ENCODE measurements at regions of chr3 and their contacts with region 1.

Region 1: DNA sequence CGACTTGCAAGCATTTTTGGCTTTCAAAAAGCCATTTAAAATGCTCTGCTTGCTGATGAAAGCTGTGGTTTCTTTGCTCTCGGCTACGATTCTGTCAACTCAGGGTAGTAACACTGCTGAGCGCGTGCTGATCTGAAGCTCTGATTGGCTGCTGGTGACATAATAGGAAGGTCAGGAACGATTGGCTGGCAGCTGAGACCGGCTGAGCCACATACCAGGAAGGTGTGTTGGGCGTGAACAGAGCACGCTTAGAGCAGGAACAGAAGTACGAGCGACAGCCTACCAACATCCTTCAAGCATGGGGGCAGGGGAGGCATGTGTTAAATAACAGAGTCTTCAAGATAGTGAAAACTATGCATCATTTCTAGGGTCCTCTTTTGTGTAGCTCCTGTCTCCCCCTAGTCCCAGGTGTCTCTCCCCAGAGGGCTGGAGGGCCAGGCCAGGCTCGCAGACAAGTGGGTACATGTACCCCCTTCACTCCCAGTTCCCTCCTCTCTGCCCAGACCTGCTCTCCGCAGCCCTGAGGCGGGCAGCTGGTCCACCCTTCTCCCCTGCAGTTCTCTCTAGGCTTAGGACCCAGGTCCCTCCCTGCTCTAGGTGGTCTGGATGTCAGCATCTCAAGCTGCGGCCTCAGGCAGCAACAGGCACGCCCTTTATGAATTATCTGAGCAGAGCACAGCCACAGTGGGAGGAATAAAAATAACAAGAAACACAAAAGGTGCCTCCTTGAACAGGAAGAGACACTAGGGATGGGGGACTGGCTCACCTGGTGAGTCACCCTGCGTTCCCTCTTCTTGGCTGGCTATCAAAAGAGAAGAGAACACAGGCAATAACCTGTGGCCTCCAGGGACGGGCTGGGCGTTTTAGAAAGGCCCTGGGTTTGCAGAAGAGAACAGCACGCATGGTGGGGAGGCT is 76.0 kb downstream of the TAMM41 start:
- DNase-seq: peak; percentile 31 to 91 (median 86)
- ATAC-seq: peak; percentile 100
- H3K4me3 ChIP-seq: peak overlapping the region; percentile 12
- H3K4me3 Mint-ChIP-seq: peak overlapping the region; percentile 22 to 79 (median 62)
- H3K27ac ChIP-seq: peak overlapping the region; percentile 56
- H3K27ac Mint-ChIP-seq: peak overlapping the region; percentile 58 to 90 (median 70)
- H3K4me1 ChIP-seq: peaks cover 15% of the 10 kb centered on the region in 2 donors
- H3K4me1 Mint-ChIP-seq: peaks cover 11 to 30% (median 24%) of the 10 kb centered on the region in 7 donors
- H3K27me3 ChIP-seq: no peaks in the 10 kb centered on the region
- H3K27me3 Mint-ChIP-seq: no peaks in the 10 kb centered on the region

Region 2: GRCh38 chr3:11238880-11239279 is 531.9 kb before region 1 on chr3:
- CTCF ChIA-PET with region 1: no interaction called
- POLR2A ChIA-PET with region 1: no interaction called
- intact Hi-C with region 1: no loop called
- DNase-seq: no peak
- ATAC-seq: no peak
- H3K4me3 ChIP-seq: no peak overlapping the region
- H3K4me3 Mint-ChIP-seq: no peak overlapping the region
- H3K27ac ChIP-seq: no peak overlapping the region
- H3K27ac Mint-ChIP-seq: peak overlapping the region in 1 of 9 donors; percentile 64
- H3K4me1 ChIP-seq: no peaks in the 10 kb centered on the region
- H3K4me1 Mint-ChIP-seq: peaks cover 0 to 15% (median 0%) of the 10 kb centered on the region in 7 donors
- H3K27me3 ChIP-seq: no peaks in the 10 kb centered on the region
- H3K27me3 Mint-ChIP-seq: peaks cover 0 to 10% (median 6%) of the 10 kb centered on the region in 5 donors

Region 3: DNA sequence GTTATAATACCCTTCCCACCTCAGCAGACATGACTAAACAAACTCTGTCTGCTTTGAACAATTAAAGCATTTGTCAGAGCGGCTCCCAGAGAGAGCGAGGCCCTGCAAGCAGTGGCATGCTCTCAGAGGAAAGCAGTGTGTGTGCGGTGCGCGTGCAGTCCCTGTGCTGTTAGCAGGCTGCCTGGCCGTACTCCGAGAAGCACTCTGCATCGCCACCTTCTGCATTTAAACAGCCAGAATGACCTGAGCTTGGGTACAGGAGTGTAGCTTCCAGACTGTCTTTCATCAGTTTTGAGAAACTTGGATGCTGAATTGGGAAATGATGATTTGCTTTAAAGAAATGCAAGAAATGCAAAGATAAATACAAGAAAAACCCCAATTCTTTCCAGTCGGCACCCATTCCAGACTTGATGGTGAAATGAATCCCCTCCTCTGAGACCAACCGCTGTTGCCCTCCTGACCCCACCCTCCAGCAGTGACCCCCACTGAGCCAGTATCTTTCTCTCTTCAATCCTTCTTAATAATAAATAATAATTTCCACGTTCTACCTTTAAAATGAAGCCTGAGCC is 240.5 kb before region 1 on chr3:
- CTCF ChIA-PET with region 1: no interaction called
- POLR2A ChIA-PET with region 1: no interaction called
- intact Hi-C with region 1: no loop called
- DNase-seq: no peak
- ATAC-seq: no peak
- H3K4me3 ChIP-seq: no peak overlapping the region
- H3K4me3 Mint-ChIP-seq: no peak overlapping the region
- H3K27ac ChIP-seq: no peak overlapping the region
- H3K27ac Mint-ChIP-seq: no peak overlapping the region
- H3K4me1 ChIP-seq: no peaks in the 10 kb centered on the region
- H3K4me1 Mint-ChIP-seq: peaks cover 0 to 5% (median 3%) of the 10 kb centered on the region in 7 donors
- H3K27me3 ChIP-seq: no peaks in the 10 kb centered on the region
- H3K27me3 Mint-ChIP-seq: no peaks in the 10 kb centered on the region

Region 4: DNA sequence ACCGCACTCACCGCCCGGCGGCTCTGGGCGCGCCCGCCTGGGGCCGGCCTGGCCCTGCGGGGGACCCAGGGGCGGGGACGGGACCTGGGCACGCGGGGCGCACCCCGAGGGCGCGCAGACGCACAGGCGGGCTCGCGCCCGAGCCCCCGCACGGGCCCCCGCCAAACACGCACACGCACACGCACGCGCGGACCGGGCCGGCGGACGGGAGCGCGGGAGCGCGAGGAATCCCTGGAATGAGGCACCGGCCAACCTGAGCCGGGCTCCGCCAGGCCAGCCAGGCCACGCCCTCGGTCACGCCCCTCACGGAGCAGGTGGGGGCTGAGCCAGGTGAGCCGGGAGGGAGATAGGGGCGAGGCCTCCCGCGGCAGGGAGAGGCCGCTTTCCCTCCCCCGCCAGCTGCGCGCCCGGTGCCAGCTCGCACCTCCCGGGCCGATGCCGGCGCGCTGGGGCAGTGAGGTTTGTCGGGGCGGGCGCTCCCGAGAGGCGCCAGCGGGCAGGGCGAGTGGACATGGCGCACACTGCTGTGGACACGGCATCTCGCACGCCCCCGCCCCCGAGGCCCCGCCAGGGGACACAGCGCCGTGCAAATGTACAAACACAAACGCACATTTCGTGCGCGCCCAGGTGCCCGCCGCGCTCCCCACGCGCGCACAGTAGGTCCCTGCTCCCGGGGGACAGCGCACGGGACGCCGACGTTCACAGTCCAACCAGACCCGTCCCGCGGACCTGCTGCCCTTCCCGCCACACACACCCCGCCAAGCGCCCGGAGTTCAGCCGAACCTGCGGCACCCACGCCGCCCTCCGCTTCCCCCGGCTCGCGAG is 51.1 kb before region 1 on chr3:
- CTCF ChIA-PET with region 1: no interaction called
- POLR2A ChIA-PET with region 1: interaction called, 3 read pairs
- intact Hi-C with region 1: loop called (anchors 1 kb)
- DNase-seq: peak; percentile 58 to 77 (median 67)
- ATAC-seq: peak; percentile 86
- H3K4me3 ChIP-seq: peak overlapping the region; percentile 74
- H3K4me3 Mint-ChIP-seq: peak overlapping the region; percentile 59 to 95 (median 82)
- H3K27ac ChIP-seq: peak overlapping the region; percentile 75
- H3K27ac Mint-ChIP-seq: peak overlapping the region in 1 of 9 donors; percentile 62
- H3K4me1 ChIP-seq: peaks cover 6 to 8% of the 10 kb centered on the region in 2 donors
- H3K4me1 Mint-ChIP-seq: peaks cover 14 to 30% (median 20%) of the 10 kb centered on the region in 7 donors
- H3K27me3 ChIP-seq: no peaks in the 10 kb centered on the region
- H3K27me3 Mint-ChIP-seq: peaks cover 2 to 34% (median 10%) of the 10 kb centered on the region in 5 donors

Region 5: GRCh38 chr3:11785024-11785377 is 14.3 kb after region 1 on chr3:
- CTCF ChIA-PET with region 1: interaction called, 6 read pairs
- POLR2A ChIA-PET with region 1: interaction called, 5 read pairs
- intact Hi-C with region 1: loop called in 1 of 2 experiments (anchors 1 kb)
- DNase-seq: peak in 6 of 9 donors; percentile 21 to 48 (median 34)
- ATAC-seq: peak; percentile 76
- H3K4me3 ChIP-seq: no peak overlapping the region
- H3K4me3 Mint-ChIP-seq: peak overlapping the region in 8 of 10 donors; percentile 26 to 86 (median 59)
- H3K27ac ChIP-seq: no peak overlapping the region
- H3K27ac Mint-ChIP-seq: peak overlapping the region in 7 of 9 donors; percentile 53 to 99 (median 82)
- H3K4me1 ChIP-seq: peaks cover 3 to 9% of the 10 kb centered on the region in 2 donors
- H3K4me1 Mint-ChIP-seq: peaks cover 10 to 27% (median 22%) of the 10 kb centered on the region in 7 donors
- H3K27me3 ChIP-seq: no peaks in the 10 kb centered on the region
- H3K27me3 Mint-ChIP-seq: no peaks in the 10 kb centered on the region

Measured in naive thymus-derived CD4-positive, alpha-beta T cell (primary cell).